Activated CD4-positive, alpha-beta T cell treated with anti-CD3 and anti-CD28 coated beads for 36 hours (primary cell): ENCODE measurements at regions of chr2 and their contacts with region 1.

Region 1: DNA sequence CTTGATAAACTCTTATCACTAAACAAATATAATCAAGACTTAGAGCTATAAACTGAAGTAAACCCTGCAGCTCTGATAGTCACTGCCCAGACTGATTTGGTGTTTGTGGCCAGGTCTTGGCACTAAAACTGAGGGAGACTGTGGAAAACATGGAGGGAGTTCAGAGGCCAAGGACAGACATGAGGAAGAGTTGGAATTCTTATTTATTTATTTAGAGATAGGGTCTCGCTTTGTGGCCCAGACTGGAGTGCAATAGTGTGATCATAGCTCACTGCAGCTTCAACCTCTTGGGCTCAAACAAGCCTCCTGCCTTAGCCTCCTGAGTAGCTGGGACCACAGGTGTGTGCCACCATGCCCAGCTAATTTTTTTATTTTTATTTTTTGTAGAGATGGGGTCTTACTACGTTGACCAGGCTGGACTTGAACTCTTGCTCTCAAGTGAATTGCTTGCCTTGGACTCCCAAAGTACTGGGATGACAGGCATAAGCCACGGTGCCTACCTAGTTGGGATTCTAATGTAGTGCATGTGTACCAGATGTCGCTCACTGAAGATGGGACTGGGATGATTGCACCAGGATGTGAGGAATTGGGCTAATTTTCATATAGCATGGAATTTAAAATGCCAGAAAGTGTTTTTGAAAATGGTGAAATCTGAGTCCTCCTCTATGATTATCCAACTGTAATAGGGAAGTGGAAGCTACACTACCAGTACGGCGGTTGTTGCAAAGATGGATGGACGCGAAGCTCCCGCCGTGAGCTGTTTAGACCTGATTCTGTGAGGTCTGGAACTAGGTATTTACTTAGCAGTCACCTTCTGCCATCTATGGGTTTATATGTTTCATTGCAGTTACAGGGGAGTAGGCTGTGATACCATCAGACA is 52.7 kb upstream of the CTLA4 start:
- DNase-seq: peak; percentile 76
- ATAC-seq: peak; percentile 70
- H3K4me3 Mint-ChIP-seq: peak overlapping the region; percentile 54
- H3K27ac Mint-ChIP-seq: peak overlapping the region; percentile 80
- H3K4me1 Mint-ChIP-seq: peaks cover 63% of the 10 kb centered on the region
- H3K27me3 Mint-ChIP-seq: no peaks in the 10 kb centered on the region

Region 2: DNA sequence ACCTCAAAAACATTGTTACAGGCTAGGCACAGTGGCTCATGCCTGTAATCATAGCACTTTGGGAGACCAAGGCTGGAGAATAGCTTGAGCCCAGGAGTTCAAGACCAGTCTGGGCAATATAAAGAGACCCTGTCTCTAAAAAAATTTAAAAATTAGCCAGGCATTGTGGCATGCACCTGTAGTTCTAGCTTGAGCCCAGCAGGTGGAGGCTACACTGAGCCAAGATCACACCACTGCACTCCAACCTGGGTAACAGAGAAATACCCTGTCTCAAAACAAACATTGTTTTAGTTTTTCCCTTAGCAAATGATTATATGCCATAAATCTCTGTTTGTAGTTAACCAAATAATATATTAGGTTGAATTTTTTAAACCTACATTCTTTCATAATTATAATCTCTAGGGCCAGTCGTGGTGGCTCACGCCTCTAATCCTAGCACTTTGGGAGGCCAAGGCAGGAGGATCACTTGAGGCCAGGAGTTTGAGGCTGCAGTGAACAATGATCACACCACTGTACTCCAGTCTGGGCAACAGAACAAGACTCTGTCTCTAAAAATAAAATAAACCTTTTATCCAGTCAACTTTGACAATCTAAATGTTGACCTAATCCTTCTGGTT is 589.4 kb before region 1 on chr2:
- CTCF ChIA-PET with region 1: no interaction called
- POLR2A ChIA-PET with region 1: no interaction called
- intact Hi-C with region 1: loop called (anchors 1 kb)
- DNase-seq: peak; percentile 51
- ATAC-seq: peak; percentile 81
- H3K4me3 Mint-ChIP-seq: no peak overlapping the region
- H3K27ac Mint-ChIP-seq: no peak overlapping the region
- H3K4me1 Mint-ChIP-seq: no peaks in the 10 kb centered on the region
- H3K27me3 Mint-ChIP-seq: no peaks in the 10 kb centered on the region

Region 3: GRCh38 chr2:203535078-203535783 is 279.7 kb before region 1 on chr2 and contains the start of gene RAPH1:
- CTCF ChIA-PET with region 1: interaction called, 4 read pairs
- POLR2A ChIA-PET with region 1: interaction called, 3 read pairs
- intact Hi-C with region 1: loop called (anchors 2 to 5 kb)
- DNase-seq: peak; percentile 85
- ATAC-seq: peak; percentile 77
- H3K4me3 Mint-ChIP-seq: peak within 1 kb of the TSS; percentile 74
- H3K27ac Mint-ChIP-seq: peak within 1 kb of the TSS; percentile 56
- H3K4me1 Mint-ChIP-seq: peaks cover 30% of the 10 kb centered on the region
- H3K27me3 Mint-ChIP-seq: peaks cover 9% of the 10 kb centered on the region
- total RNA-seq, gene RAPH1: 8.5 to 9.9 TPM

Region 4: DNA sequence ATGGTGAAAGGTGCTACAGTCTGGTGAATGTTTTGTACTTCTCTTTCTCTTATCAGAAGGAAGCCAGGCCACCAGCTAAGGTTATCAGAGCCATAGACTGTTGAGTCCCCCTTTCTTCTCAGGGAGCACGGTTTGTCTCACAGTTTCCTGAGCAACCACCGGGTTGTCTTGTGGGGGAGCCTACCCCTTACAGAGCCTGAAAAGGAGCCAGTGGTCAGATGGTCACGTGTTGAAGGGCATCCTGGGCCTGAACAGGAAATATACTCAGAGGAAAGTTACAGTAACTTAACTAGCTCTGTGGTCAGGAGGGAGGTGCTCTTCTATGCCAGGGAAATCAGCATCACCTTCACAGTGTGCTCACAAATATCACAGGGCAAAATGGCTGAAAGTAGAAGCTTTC is 96.8 kb before region 1 on chr2:
- CTCF ChIA-PET with region 1: interaction called, 17 read pairs
- POLR2A ChIA-PET with region 1: interaction called, 6 read pairs
- intact Hi-C with region 1: no loop called
- DNase-seq: peak; percentile 77
- ATAC-seq: peak; percentile 63
- H3K4me3 Mint-ChIP-seq: peak overlapping the region; percentile 63
- H3K27ac Mint-ChIP-seq: peak overlapping the region; percentile 95
- H3K4me1 Mint-ChIP-seq: peaks cover 97% of the 10 kb centered on the region
- H3K27me3 Mint-ChIP-seq: no peaks in the 10 kb centered on the region

Region 5: DNA sequence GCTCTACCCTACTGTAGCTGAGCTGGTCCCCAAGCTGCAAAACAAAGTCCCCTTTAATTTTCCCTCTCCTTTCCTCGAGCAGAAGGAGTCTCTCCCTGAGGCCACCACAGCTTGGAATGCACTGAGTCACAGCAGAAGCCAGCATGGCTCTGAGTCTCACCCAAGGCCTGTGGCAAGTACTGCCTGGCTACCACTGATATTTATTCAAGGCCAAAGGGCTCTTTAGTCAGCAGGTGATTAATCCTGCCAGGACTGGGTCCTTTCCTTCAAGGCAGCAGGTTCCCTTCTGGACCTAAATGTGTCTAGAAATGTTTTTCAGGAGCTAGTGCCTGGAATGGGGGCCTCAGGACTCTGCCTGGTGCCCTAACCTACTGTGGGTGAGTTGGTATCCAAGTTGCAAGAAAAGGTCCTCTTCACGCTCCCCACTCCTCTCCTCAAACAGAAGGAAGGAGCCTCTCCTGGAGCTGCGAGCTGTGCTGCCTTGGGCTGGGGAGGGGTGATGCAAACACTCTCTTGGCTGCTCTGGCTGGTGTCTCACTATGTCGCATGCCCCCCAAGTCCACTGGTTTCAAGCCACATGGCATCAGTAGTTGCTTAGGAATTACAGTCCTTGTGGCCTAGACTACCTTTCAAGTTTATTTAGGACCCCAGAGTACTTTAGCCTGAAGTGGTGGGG is 55.1 kb before region 1 on chr2:
- CTCF ChIA-PET with region 1: interaction called, 3 read pairs
- POLR2A ChIA-PET with region 1: interaction called, 8 read pairs
- intact Hi-C with region 1: loop called in 1 of 2 experiments (anchors 1 kb)
- DNase-seq: no peak
- ATAC-seq: no peak
- H3K4me3 Mint-ChIP-seq: no peak overlapping the region
- H3K27ac Mint-ChIP-seq: no peak overlapping the region
- H3K4me1 Mint-ChIP-seq: peaks cover 61% of the 10 kb centered on the region
- H3K27me3 Mint-ChIP-seq: no peaks in the 10 kb centered on the region

Region 6: DNA sequence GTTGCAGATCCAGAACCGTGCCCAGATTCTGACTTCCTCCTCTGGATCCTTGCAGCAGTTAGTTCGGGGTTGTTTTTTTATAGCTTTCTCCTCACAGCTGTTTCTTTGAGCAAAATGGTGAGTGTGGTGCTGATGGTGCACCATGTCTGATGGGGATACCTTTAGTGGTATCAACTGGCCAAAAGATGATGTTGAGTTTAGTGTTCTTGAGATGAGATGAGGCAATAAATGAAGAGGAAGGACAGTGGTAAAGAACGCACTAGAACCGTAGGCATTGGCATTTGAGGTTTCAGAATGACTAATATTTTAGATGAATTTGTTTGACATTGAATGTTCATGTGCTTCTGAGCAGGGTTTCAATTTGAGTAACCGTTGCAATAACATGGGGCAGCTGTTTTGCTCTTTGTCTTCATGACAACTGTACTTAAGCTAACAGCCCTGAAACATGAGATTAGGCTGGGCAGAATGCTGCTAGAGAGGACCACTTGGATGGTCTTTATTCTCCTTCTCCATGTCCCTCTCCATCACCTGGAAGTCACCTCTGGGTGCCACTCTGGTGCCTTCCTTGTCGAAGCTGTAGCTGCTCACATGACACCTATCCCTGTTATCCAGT is 56.6 kb after region 1 on chr2:
- CTCF ChIA-PET with region 1: interaction called, 10 read pairs
- POLR2A ChIA-PET with region 1: interaction called, 8 read pairs
- intact Hi-C with region 1: no loop called
- DNase-seq: peak; percentile 60
- ATAC-seq: peak; percentile 47
- H3K4me3 Mint-ChIP-seq: peak overlapping the region; percentile 93
- H3K27ac Mint-ChIP-seq: peak overlapping the region; percentile 100
- H3K4me1 Mint-ChIP-seq: peaks cover 73% of the 10 kb centered on the region
- H3K27me3 Mint-ChIP-seq: no peaks in the 10 kb centered on the region